MCF 10A (cell line): ENCODE measurements at regions of chr1 and their contacts with region 1.

Region 1: GRCh38 chr1:117929173-117929989 is at the starts of genes GDAP2 and WDR3:
- DNase-seq: peak; percentile 98
- H3K4me3 Mint-ChIP-seq: peak within 1 kb of the TSS; percentile 89
- H3K27ac Mint-ChIP-seq: peak within 1 kb of the TSS; percentile 78
- H3K4me1 Mint-ChIP-seq: peaks cover 30% of the 10 kb centered on the region
- H3K27me3 Mint-ChIP-seq: no peaks in the 10 kb centered on the region
- CTCF ChIP-seq: no peak
- total RNA-seq, gene GDAP2: 27.3 and 29.7 TPM in 2 replicates
- total RNA-seq, gene WDR3: 57.3 and 74.1 TPM in 2 replicates

Region 2: GRCh38 chr1:117919376-117919775 is 10.0 kb before region 1 on chr1:
- CTCF ChIA-PET with region 1: interaction called, 4 read pairs
- POLR2A ChIA-PET with region 1: interaction called, 16 read pairs
- intact Hi-C with region 1: no loop called
- DNase-seq: no peak
- H3K4me3 Mint-ChIP-seq: no peak overlapping the region
- H3K27ac Mint-ChIP-seq: no peak overlapping the region
- H3K4me1 Mint-ChIP-seq: no peaks in the 10 kb centered on the region
- H3K27me3 Mint-ChIP-seq: no peaks in the 10 kb centered on the region
- CTCF ChIP-seq: no peak

Region 3: DNA sequence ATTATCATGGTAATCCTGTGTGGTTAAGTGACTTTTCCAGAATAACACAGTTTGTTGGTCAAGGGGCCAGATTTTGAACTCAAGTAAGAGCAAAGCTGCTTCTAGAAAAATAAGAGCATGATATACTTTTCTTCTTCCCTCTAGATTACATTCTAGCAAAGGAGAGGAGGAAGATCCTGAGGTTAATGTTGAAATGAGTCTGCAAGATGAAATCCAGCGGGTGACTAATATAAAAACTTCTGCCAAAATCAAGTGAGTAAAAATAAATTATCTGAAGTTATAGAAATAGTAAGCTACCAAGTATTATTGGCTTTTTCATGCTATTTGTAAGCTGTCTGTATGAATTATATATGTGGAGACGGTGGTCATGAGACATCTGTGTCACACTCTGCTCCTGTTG is 12.9 kb after region 1 on chr1:
- CTCF ChIA-PET with region 1: interaction called, 5 read pairs
- POLR2A ChIA-PET with region 1: interaction called, 15 read pairs
- intact Hi-C with region 1: no loop called
- DNase-seq: no peak
- H3K4me3 Mint-ChIP-seq: no peak overlapping the region
- H3K27ac Mint-ChIP-seq: no peak overlapping the region
- H3K4me1 Mint-ChIP-seq: no peaks in the 10 kb centered on the region
- H3K27me3 Mint-ChIP-seq: no peaks in the 10 kb centered on the region
- CTCF ChIP-seq: no peak

Region 4: GRCh38 chr1:117952386-117952785 is 23.0 kb after region 1 on chr1:
- CTCF ChIA-PET with region 1: no interaction called
- POLR2A ChIA-PET with region 1: interaction called, 28 read pairs
- intact Hi-C with region 1: no loop called
- DNase-seq: no peak
- H3K4me3 Mint-ChIP-seq: no peak overlapping the region
- H3K27ac Mint-ChIP-seq: no peak overlapping the region
- H3K4me1 Mint-ChIP-seq: no peaks in the 10 kb centered on the region
- H3K27me3 Mint-ChIP-seq: no peaks in the 10 kb centered on the region
- CTCF ChIP-seq: no peak

Region 5: DNA sequence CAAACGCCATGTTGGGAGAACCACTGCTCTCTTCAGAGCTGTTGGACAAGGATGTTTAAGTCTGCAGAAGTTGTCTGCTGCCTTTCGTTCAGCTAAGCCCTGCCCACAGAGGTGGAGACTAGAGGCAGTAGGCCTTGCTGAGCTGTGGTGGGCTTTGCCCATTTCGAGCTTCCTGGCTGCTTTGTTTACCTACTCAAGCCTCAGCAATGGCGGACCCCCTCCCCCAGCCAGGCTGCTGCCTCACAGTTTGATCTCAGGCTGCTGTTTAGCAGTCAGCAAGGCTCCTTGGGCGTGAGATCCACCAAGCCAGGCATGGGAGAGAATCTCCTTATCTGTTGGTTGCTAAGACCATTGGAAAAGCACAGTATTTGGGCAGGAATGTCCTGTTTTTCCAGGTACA is 74.9 kb after region 1 on chr1:
- CTCF ChIA-PET with region 1: no interaction called
- POLR2A ChIA-PET with region 1: no interaction called
- intact Hi-C with region 1: no loop called
- DNase-seq: no peak
- H3K4me3 Mint-ChIP-seq: no peak overlapping the region
- H3K27ac Mint-ChIP-seq: no peak overlapping the region
- H3K4me1 Mint-ChIP-seq: no peaks in the 10 kb centered on the region
- H3K27me3 Mint-ChIP-seq: no peaks in the 10 kb centered on the region
- CTCF ChIP-seq: no peak